Esophagus squamous epithelium (tissue), 5 donors: ENCODE measurements at regions of chr12 and their contacts with region 1.

Region 1: GRCh38 chr12:116737774-116738700 is at the starts of genes RNFT2 and SPRING1:
- DNase-seq: peak; percentile 96
- H3K4me3 ChIP-seq: peak within 1 kb of the TSS; percentile 85 to 97 (median 88)
- H3K27ac ChIP-seq: peak within 1 kb of the TSS; percentile 78 to 92 (median 86)
- H3K4me1 ChIP-seq: peaks cover 4 to 21% (median 12%) of the 10 kb centered on the region in 3 donors
- H3K27me3 ChIP-seq: no peaks in the 10 kb centered on the region
- CTCF ChIP-seq: peak in 1 of 6 experiments; percentile 16
- POLR2A ChIP-seq: peak in 3 of 4 donors; percentile 67 to 90 (median 79)
- total RNA-seq, gene RNFT2: 0.26 to 0.38 TPM in 2 of 4 donors, not detected in the others
- total RNA-seq, gene SPRING1: 14.6 to 25.5 (median 19.1) TPM

Region 2: GRCh38 chr12:116818948-116819832 is 81.2 kb after region 1 on chr12:
- intact Hi-C with region 1: loop called (anchors 10 kb)
- DNase-seq: peak; percentile 35
- H3K4me3 ChIP-seq: peak overlapping the region; percentile 62 to 82 (median 72)
- H3K27ac ChIP-seq: peak overlapping the region; percentile 85 to 92 (median 90)
- H3K4me1 ChIP-seq: peaks cover 0 to 20% (median 8%) of the 10 kb centered on the region in 3 donors
- H3K27me3 ChIP-seq: peaks cover 0 to 6% (median 0%) of the 10 kb centered on the region in 4 donors
- CTCF ChIP-seq: peak in 3 of 6 experiments; percentile 16 to 25 (median 21)
- POLR2A ChIP-seq: peak in 2 of 4 donors; percentile 59 to 62